ENCODE measurements at regions of chr19 and their contacts with region 1.

Region 1: DNA sequence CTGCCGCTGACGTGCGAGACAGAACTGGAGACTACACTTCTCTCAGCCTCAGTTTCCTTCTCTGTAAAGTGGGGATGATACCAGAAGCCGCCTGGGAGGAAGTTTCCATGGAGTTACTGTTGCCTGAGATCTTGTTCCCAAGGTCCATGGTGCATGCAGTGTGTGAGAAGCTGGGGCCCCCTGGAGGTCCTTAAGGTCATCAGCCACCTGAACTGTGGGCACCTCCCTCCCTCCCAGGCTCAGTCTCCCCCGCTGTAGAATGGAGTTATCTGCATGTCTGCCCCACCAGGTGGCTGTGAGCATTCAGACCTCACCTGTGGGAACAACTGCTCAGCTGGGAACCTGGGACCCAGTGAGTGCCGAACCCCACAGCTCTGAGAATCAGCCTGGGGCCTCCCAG is 2.7 kb downstream of the CRX start:
- DNase-seq: no peak
- H3K4me3 ChIP-seq: no peak overlapping the region
- H3K27ac ChIP-seq: no peak overlapping the region
- H3K4me1 ChIP-seq: no peaks in the 10 kb centered on the region
- H3K27me3 ChIP-seq: peaks cover 70% of the 10 kb centered on the region
- CTCF ChIP-seq: no peak

Region 2: DNA sequence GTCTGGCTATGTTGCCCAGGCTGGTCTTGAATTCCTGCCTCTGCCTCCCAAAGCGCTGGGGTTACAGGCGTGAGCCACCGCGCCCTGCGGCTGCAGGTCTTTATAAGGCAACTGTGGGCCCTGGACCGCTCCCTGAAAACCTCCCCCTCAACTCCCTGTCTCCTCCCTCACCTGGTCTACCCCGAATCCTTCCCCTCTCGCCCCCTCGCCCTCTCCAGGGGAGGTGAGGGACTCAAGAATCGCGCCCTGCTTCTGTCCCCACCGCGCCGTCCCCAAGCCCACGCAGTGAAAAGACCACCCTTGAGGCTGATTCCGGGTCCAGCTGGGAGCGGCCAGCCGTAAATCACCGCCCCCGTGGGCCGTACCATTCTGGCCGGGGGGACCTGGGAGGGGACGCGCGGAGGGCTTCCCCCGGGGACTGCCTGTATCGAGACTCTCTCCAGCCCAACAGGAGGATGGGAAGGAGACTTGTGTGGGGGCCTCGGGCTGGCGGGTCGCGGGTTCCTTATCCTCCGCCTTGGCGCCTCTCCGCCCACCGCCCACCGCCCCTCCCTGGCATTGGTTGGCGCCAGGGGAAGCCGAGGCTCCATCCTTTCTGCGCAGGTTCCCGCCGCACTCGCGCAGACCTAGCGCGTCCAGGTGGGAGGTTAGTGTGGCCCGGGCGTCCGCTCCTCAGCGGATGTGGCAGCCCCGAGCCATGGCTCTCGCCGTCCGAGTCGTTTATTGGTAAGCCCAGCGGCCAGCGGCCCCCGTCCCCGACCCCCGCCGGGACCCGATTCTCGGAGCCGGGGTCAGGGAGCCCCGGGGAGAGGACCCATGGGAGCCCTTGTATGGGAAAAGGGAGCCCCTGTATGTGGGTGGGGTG is 46.1 kb before region 1 on chr19 and contains the start of gene SELENOW:
- CTCF ChIA-PET with region 1: no interaction called
- POLR2A ChIA-PET with region 1: no interaction called
- intact Hi-C with region 1: no loop called
- DNase-seq: peak; percentile 75 to 85
- H3K4me3 ChIP-seq: peak within 1 kb of the TSS; percentile 95
- H3K27ac ChIP-seq: peak within 1 kb of the TSS; percentile 84
- H3K4me1 ChIP-seq: peaks cover 24% of the 10 kb centered on the region
- H3K27me3 ChIP-seq: no peaks in the 10 kb centered on the region
- CTCF ChIP-seq: no peak
- total RNA-seq, gene SELENOW: 186 TPM in 2 replicates

Region 3: DNA sequence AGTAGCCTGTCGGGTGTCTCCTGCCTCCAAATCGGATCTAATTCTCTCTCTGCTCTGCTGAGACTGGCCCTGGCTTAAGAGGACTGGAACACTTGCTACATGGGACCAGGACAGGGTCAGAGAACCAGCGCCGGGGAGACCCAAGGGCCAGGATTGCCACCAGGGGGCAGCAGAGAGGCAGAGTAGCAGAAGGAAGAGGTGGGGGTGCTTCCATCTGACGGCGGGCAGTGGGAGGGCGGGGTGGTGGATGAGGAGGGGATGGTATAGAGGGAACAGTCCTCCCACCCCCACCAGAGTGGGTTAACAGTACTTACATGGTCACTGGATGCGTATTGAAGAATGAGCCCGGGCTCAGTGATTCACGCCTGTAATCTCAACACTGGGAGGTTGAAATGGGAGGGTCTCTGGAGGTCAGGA is 34.0 kb before region 1 on chr19:
- CTCF ChIA-PET with region 1: no interaction called
- POLR2A ChIA-PET with region 1: no interaction called
- intact Hi-C with region 1: no loop called
- DNase-seq: peak; percentile 62 to 82
- H3K4me3 ChIP-seq: peak overlapping the region; percentile 42; the same call in 1 of the 2 replicates
- H3K27ac ChIP-seq: peak overlapping the region; percentile 65
- H3K4me1 ChIP-seq: peaks cover 10% of the 10 kb centered on the region
- H3K27me3 ChIP-seq: no peaks in the 10 kb centered on the region
- CTCF ChIP-seq: peak; percentile 99

Region 4: DNA sequence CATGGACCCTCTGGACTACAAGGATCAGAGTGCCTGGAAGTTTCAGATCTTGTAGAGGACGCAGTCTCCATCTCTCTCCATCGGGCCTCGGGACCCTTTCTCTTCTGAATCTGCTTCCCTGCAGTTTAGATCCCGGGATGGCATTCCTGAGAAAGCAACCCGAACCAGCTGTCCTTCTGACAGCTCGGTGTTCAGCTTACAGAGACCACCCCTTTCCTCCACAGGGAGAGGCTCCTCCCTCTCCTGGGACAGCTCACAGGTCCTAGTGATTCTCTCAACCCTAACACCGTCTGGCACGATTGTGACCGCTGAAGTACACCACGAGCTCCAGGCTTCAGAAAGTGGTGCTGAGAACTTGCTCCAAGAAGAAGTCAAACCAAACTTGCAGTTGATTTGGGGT is 15.5 kb after region 1 on chr19:
- CTCF ChIA-PET with region 1: no interaction called
- POLR2A ChIA-PET with region 1: no interaction called
- intact Hi-C with region 1: no loop called
- DNase-seq: no peak
- H3K4me3 ChIP-seq: no peak overlapping the region
- H3K27ac ChIP-seq: no peak overlapping the region
- H3K4me1 ChIP-seq: no peaks in the 10 kb centered on the region
- H3K27me3 ChIP-seq: peaks cover 49% of the 10 kb centered on the region
- CTCF ChIP-seq: no peak

Region 5: GRCh38 chr19:48102870-48103751 is 278.7 kb after region 1 on chr19:
- CTCF ChIA-PET with region 1: no interaction called
- POLR2A ChIA-PET with region 1: interaction called, 45 read pairs
- intact Hi-C with region 1: no loop called
- DNase-seq: peak; percentile 31 to 61
- H3K4me3 ChIP-seq: no peak overlapping the region
- H3K27ac ChIP-seq: no peak overlapping the region
- H3K4me1 ChIP-seq: no peaks in the 10 kb centered on the region
- H3K27me3 ChIP-seq: no peaks in the 10 kb centered on the region; the same call in 1 of the 2 replicates
- CTCF ChIP-seq: peak; percentile 93